Lower leg skin (tissue), 4 donors: ENCODE measurements at regions of chr5 and their contacts with region 1.

Region 1: GRCh38 chr5:171592737-171593136 is 173.3 kb downstream of the FGF18 start:
- DNase-seq: no peak
- H3K4me3 ChIP-seq: no peak overlapping the region
- CTCF ChIP-seq: no peak
- POLR2A ChIP-seq: no peak

Region 2: GRCh38 chr5:171162602-171163001 is 430.1 kb before region 1 on chr5:
- intact Hi-C with region 1: no loop called
- DNase-seq: no peak
- H3K4me3 ChIP-seq: no peak overlapping the region
- CTCF ChIP-seq: no peak
- POLR2A ChIP-seq: no peak

Region 3: GRCh38 chr5:171314728-171315385 is 277.9 kb before region 1 on chr5:
- intact Hi-C with region 1: no loop called
- DNase-seq: peak in 1 of 2 donors; percentile 80
- H3K4me3 ChIP-seq: no peak overlapping the region
- CTCF ChIP-seq: no peak
- POLR2A ChIP-seq: no peak

Region 4: DNA sequence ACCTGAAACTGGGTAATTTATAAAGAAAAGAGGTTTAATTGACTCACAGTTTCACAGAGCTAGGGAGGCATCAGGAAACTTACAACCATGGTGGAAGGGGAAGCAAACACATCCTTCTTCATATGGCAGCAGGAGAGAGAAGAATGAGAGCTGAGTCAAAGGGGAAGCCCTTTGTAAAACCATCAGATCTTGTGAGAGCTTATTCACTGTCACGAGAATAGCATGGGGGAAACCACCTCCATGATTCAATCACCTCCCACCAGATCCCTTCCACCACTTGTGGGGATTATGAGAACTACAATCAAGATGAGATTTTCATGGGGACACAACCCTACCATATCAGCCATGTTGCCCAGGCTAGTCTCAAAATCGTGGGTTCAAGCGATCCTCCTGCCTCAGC is 29.9 kb before region 1 on chr5:
- intact Hi-C with region 1: loop called (anchors 2 kb)
- DNase-seq: no peak
- H3K4me3 ChIP-seq: no peak overlapping the region
- CTCF ChIP-seq: no peak
- POLR2A ChIP-seq: no peak